B cell (primary cell): ENCODE measurements at regions of chr11 and their contacts with region 1.

Region 1: GRCh38 chr11:68213555-68214174 is 569 bp upstream of the KMT5B start:
- DNase-seq: peak; percentile 98
- ATAC-seq: peak; percentile 50
- H3K4me3 ChIP-seq: peak overlapping the region; percentile 39 to 97 (median 82)
- H3K4me3 Mint-ChIP-seq: peak overlapping the region; percentile 93
- H3K27ac ChIP-seq: peak overlapping the region; percentile 51 to 91
- H3K27ac Mint-ChIP-seq: peak overlapping the region; percentile 92
- H3K4me1 ChIP-seq: peaks cover 47 to 49% of the 10 kb centered on the region in 2 donors
- H3K4me1 Mint-ChIP-seq: peaks cover 46% of the 10 kb centered on the region
- H3K27me3 ChIP-seq: peaks cover 0 to 6% (median 0%) of the 10 kb centered on the region in 4 experiments
- H3K27me3 Mint-ChIP-seq: no peaks in the 10 kb centered on the region
- CTCF ChIP-seq: no peak

Region 2: GRCh38 chr11:68030318-68031138 is 183.1 kb before region 1 on chr11 and contains the start of gene NDUFS8:
- CTCF ChIA-PET with region 1: interaction called, 6 read pairs
- POLR2A ChIA-PET with region 1: no interaction called
- intact Hi-C with region 1: loop called (anchors 10 kb)
- DNase-seq: peak; percentile 98
- ATAC-seq: peak; percentile 96
- H3K4me3 ChIP-seq: peak within 1 kb of the TSS; percentile 56 to 90 (median 81)
- H3K4me3 Mint-ChIP-seq: peak within 1 kb of the TSS; percentile 100
- H3K27ac ChIP-seq: peak within 1 kb of the TSS; percentile 57 to 78
- H3K27ac Mint-ChIP-seq: peak within 1 kb of the TSS; percentile 94
- H3K4me1 ChIP-seq: peaks cover 12 to 20% of the 10 kb centered on the region in 2 donors
- H3K4me1 Mint-ChIP-seq: peaks cover 21% of the 10 kb centered on the region
- H3K27me3 ChIP-seq: no peaks in the 10 kb centered on the region
- H3K27me3 Mint-ChIP-seq: no peaks in the 10 kb centered on the region
- CTCF ChIP-seq: no peak
- total RNA-seq, gene NDUFS8: 73.9 and 75.2 TPM in 2 replicates

Region 3: GRCh38 chr11:68191661-68192579 is 21.7 kb before region 1 on chr11:
- CTCF ChIA-PET with region 1: interaction called, 26 read pairs
- POLR2A ChIA-PET with region 1: no interaction called
- intact Hi-C with region 1: no loop called
- DNase-seq: no peak
- ATAC-seq: no peak
- H3K4me3 ChIP-seq: no peak overlapping the region
- H3K4me3 Mint-ChIP-seq: no peak overlapping the region
- H3K27ac ChIP-seq: no peak overlapping the region
- H3K27ac Mint-ChIP-seq: no peak overlapping the region
- H3K4me1 ChIP-seq: peaks cover 15 to 38% of the 10 kb centered on the region in 2 donors
- H3K4me1 Mint-ChIP-seq: peaks cover 52% of the 10 kb centered on the region
- H3K27me3 ChIP-seq: no peaks in the 10 kb centered on the region
- H3K27me3 Mint-ChIP-seq: no peaks in the 10 kb centered on the region
- CTCF ChIP-seq: no peak

Region 4: DNA sequence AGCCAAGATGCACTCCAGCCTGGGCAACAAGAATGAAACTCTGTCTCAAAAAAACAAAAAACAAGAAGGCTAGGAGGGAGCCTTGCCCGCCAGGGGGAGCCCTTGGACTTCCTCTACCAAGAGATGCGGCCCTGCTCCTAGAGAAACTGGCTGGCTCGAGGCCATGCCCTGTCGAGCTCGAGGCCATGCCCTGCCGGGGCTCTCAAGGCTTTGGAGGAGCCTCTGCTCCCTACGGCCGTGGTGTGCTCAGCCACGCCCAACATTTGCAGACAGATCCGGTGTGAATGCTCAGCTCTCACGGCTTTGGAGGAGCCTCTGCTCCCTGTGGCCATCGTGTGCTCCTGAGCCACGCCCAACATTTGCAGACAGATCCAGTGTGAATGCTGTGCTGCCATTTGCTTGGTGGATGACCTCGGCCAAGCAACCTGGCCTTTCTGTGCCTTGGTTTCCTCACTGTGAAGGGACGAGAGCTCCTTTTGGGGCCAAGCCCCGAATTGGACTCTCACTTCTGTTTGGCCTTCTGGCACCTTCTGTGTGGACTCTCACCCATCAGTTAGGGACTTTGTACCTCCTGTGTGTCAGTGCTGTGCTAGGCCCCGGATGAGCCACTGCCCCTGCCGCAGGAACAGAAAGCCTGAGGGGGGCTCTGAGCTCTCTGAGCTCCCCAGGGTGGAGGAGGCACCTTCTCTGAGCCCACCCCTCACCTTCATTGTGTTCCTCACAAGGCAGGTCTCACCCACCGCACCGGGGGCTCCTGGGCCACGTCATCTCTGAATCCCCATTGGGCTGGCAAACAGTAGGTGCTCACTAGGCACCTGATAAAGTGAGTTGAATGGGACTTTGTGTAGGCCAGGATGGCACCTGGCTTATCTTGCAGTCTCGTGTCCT is 44.1 kb after region 1 on chr11:
- CTCF ChIA-PET with region 1: interaction called, 7 read pairs
- POLR2A ChIA-PET with region 1: no interaction called
- intact Hi-C with region 1: loop called (anchors 2 kb)
- DNase-seq: peak; percentile 91
- ATAC-seq: peak; percentile 94
- H3K4me3 ChIP-seq: no peak overlapping the region
- H3K4me3 Mint-ChIP-seq: peak overlapping the region; percentile 52
- H3K27ac ChIP-seq: peak overlapping the region; percentile 4 to 38
- H3K27ac Mint-ChIP-seq: peak overlapping the region; percentile 91
- H3K4me1 ChIP-seq: peaks cover 11 to 21% of the 10 kb centered on the region in 2 donors
- H3K4me1 Mint-ChIP-seq: peaks cover 24% of the 10 kb centered on the region
- H3K27me3 ChIP-seq: no peaks in the 10 kb centered on the region
- H3K27me3 Mint-ChIP-seq: no peaks in the 10 kb centered on the region
- CTCF ChIP-seq: peak; percentile 92

Region 5: GRCh38 chr11:68271781-68272608 is 58.3 kb after region 1 on chr11 and contains the start of gene C11orf24:
- CTCF ChIA-PET with region 1: interaction called, 11 read pairs
- POLR2A ChIA-PET with region 1: interaction called, 12 read pairs
- intact Hi-C with region 1: loop called (anchors 2 kb)
- DNase-seq: peak; percentile 98
- ATAC-seq: peak; percentile 74
- H3K4me3 ChIP-seq: peak within 1 kb of the TSS; percentile 62 to 99 (median 98)
- H3K4me3 Mint-ChIP-seq: peak within 1 kb of the TSS; percentile 91
- H3K27ac ChIP-seq: peak within 1 kb of the TSS; percentile 98
- H3K27ac Mint-ChIP-seq: peak within 1 kb of the TSS; percentile 97
- H3K4me1 ChIP-seq: peaks cover 58 to 70% of the 10 kb centered on the region in 2 donors
- H3K4me1 Mint-ChIP-seq: peaks cover 74% of the 10 kb centered on the region
- H3K27me3 ChIP-seq: no peaks in the 10 kb centered on the region
- H3K27me3 Mint-ChIP-seq: no peaks in the 10 kb centered on the region
- CTCF ChIP-seq: no peak
- total RNA-seq, gene C11orf24: 81.8 and 88.6 TPM in 2 replicates

Region 6: DNA sequence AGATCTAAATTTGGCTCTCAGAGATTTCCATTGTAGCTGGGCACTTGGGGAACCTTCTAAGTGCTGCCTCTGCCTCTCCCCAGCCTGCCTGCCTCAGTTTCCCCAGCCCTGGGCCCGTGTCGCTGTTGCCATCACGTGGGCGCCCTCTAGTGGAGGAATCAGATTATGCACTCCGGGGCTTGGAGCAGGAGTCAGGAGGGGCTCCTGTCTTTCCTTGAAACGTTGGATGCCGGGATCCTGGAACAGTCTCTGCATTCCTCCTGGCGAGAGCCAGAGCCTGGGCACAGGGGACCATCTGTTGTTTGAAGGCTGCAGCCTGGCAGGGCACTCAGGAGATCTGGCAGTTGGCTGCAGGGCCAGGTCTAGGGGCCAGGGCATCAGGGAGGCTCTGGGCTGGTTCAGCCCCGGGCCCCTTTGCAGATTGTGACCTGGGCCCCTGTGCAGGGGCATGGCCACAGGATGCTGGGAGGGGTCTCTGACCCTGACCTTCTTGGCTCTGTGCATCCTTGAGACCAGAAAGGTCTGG is 170.4 kb after region 1 on chr11:
- CTCF ChIA-PET with region 1: interaction called, 4 read pairs
- POLR2A ChIA-PET with region 1: no interaction called
- intact Hi-C with region 1: loop called (anchors 1 kb)
- DNase-seq: peak; percentile 73
- ATAC-seq: peak; percentile 39
- H3K4me3 ChIP-seq: no peak overlapping the region
- H3K4me3 Mint-ChIP-seq: no peak overlapping the region
- H3K27ac ChIP-seq: no peak overlapping the region
- H3K27ac Mint-ChIP-seq: peak overlapping the region; percentile 59
- H3K4me1 ChIP-seq: peaks cover 32 to 41% of the 10 kb centered on the region in 2 donors
- H3K4me1 Mint-ChIP-seq: peaks cover 42% of the 10 kb centered on the region
- H3K27me3 ChIP-seq: no peaks in the 10 kb centered on the region
- H3K27me3 Mint-ChIP-seq: no peaks in the 10 kb centered on the region
- CTCF ChIP-seq: peak; percentile 96

Region 7: GRCh38 chr11:68459886-68460740 is 246.4 kb after region 1 on chr11:
- CTCF ChIA-PET with region 1: no interaction called
- POLR2A ChIA-PET with region 1: interaction called, 3 read pairs
- intact Hi-C with region 1: loop called (anchors 1 kb)
- DNase-seq: peak; percentile 97
- ATAC-seq: peak; percentile 90
- H3K4me3 ChIP-seq: peak overlapping the region; percentile 82 to 96 (median 90)
- H3K4me3 Mint-ChIP-seq: peak overlapping the region; percentile 96
- H3K27ac ChIP-seq: peak overlapping the region; percentile 95 to 96
- H3K27ac Mint-ChIP-seq: peak overlapping the region; percentile 97
- H3K4me1 ChIP-seq: peaks cover 29 to 31% of the 10 kb centered on the region in 2 donors
- H3K4me1 Mint-ChIP-seq: peaks cover 40% of the 10 kb centered on the region
- H3K27me3 ChIP-seq: no peaks in the 10 kb centered on the region
- H3K27me3 Mint-ChIP-seq: no peaks in the 10 kb centered on the region
- CTCF ChIP-seq: no peak